ENCODE measurements at regions of chr6 and their contacts with region 1.

Region 1: DNA sequence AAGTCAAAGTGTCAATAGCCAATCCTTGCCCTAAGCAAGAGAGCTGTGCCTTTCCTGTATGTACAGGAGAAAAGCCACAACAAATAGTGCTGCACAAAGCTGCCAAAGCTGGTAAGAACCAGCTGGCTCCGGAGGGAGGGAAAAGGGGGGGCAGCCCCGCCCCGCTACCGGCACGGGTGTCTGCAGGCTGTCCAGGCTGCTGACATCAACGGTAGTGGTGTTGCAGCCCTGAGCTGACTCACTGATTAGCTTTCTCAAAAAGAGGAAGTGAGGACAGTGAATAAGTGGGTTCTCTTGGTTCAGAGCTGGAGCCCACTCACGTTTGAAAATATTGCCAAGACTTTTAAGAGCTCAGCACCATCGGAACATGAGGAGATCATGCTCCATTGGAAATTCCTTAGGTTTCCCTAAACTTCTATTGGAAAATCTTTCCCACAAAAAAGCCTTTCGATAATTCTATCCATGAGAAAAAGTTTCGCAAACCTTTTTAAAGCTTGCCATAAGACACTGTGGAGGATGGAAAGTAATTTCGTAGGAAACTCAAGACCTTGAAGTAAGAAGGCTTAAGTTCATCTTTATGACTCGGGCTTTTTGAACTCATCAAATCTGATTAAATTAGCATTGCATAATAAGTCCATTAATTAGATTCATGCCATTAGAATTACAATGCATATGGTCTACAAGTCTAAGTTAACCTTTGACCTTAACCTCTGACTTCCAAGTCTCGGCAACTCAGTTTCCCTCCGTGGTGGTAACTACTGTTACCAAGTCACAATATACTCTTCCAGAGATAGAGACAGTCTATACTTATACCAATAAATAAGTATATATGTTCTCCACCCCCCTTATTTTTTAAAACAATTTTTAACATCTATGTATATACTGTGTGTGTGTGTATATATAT is 67.0 kb downstream of the TNFRSF21 start:
- DNase-seq: peak; percentile 93
- H3K4me3 ChIP-seq: no peak overlapping the region
- H3K27ac ChIP-seq: peak overlapping the region; percentile 62
- H3K4me1 ChIP-seq: peaks cover 20% of the 10 kb centered on the region
- H3K27me3 ChIP-seq: no peaks in the 10 kb centered on the region
- CTCF ChIP-seq: no peak

Region 2: DNA sequence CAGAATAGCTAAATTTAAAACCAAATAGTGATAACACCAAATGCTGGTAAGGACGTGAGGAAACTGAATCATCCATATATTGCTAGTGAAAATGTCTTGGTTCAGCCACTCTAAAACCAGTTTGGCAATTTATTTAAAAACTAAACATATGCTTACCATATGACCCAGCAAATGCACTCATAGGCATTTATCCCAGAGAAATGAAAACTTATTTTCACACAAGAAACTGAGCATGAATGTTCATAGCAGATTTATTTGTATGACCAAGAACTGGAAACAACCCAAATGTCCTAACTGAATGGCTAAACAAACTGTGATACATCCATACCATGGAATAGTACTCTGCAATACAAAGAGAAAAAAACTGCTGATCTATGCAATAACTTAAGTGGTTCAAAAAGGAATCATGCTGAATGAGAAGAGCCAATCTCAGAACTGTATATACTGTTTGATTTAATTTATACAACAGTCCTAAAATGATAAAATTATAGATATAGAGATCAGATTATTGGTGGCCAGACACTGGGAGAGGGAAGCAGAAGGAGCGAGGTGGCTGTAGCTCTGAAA is 85.0 kb before region 1 on chr6:
- CTCF ChIA-PET with region 1: no interaction called
- dilution Hi-C with region 1: loop called (anchors 5 kb)
- in situ Hi-C with region 1: no loop called
- intact Hi-C with region 1: no loop called
- DNase-seq: no peak
- H3K4me3 ChIP-seq: no peak overlapping the region
- H3K27ac ChIP-seq: no peak overlapping the region
- H3K4me1 ChIP-seq: peaks cover 14% of the 10 kb centered on the region
- H3K27me3 ChIP-seq: no peaks in the 10 kb centered on the region
- CTCF ChIP-seq: no peak

Measured in mammary epithelial cell (primary cell).